ENCODE measurements at regions of chr2 and their contacts with region 1.

Region 1: DNA sequence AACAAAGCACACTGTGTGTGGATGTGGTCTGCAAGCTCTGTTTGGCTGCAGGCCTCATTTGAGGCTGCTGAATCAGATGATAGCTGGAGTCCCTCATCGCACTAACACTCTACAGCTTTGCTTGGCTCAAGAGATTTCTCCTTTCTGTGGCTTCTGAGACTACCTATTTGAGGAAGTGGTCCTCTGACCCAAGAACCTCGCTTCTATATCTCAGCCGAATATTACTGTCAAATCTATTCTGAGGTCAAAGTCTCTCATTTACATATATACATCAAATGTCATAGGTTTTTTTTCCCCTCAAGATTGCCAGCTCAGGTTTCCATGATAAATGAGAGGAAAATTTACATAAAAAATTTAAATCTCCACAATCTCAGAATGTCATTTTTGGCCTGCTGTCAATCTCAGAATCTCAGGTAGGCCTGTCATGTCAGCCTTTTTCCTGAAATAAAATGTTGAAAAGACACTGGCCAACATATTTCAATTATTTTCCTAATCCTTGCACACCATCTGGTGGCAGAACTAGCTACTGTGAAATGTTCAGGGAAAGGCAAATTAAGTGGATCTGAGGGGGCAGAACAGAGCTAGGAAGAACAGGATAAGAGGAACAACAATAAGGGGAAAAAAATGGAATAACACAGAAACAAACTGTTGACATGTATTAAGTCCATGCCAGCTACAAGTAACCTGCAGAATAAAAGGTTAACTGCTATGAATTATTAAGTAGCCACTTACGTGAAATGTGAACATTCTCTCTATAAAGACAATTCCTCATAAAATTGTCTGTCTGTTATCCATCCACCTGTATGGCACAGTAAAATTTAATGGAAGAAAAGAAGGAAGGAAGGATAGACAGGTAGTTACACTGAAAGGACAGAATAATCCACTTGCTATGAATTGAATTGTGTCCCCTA is 39.3 kb downstream of the AP1S3 start:
- DNase-seq: peak in 1 of 4 experiments; percentile 17
- ATAC-seq: peak; percentile 53; the same call in 1 of the 3 replicates
- H3K4me3 ChIP-seq: no peak overlapping the region
- H3K27ac ChIP-seq: no peak overlapping the region
- H3K4me1 ChIP-seq: no peaks in the 10 kb centered on the region
- H3K27me3 ChIP-seq: no peaks in the 10 kb centered on the region; a peak in 1 of 5 replicates
- CTCF ChIP-seq: peak; percentile 39 to 61 (median 41); a peak in 4 of 6 replicates
- EP300 ChIP-seq: no peak
- POLR2A ChIP-seq: no peak
- RAD21 ChIP-seq: peak; percentile 62 to 73

Region 2: GRCh38 chr2:223459328-223459939 is 338.6 kb before region 1 on chr2:
- CTCF ChIA-PET with region 1: no interaction called
- POLR2A ChIA-PET with region 1: no interaction called
- in situ Hi-C with region 1: no loop called
- intact Hi-C with region 1: loop called (anchors 1 kb)
- DNase-seq: peak in 3 of 4 experiments; percentile 6 to 7 (median 6)
- ATAC-seq: no peak
- H3K4me3 ChIP-seq: no peak overlapping the region
- H3K27ac ChIP-seq: no peak overlapping the region
- H3K4me1 ChIP-seq: no peaks in the 10 kb centered on the region
- H3K27me3 ChIP-seq: no peaks in the 10 kb centered on the region
- CTCF ChIP-seq: peak in 2 of 3 experiments; percentile 6 to 34; a peak in 2 of 6 replicates
- EP300 ChIP-seq: no peak
- POLR2A ChIP-seq: no peak
- RAD21 ChIP-seq: peak; percentile 35 to 42; a peak in 3 of 4 replicates

Region 3: DNA sequence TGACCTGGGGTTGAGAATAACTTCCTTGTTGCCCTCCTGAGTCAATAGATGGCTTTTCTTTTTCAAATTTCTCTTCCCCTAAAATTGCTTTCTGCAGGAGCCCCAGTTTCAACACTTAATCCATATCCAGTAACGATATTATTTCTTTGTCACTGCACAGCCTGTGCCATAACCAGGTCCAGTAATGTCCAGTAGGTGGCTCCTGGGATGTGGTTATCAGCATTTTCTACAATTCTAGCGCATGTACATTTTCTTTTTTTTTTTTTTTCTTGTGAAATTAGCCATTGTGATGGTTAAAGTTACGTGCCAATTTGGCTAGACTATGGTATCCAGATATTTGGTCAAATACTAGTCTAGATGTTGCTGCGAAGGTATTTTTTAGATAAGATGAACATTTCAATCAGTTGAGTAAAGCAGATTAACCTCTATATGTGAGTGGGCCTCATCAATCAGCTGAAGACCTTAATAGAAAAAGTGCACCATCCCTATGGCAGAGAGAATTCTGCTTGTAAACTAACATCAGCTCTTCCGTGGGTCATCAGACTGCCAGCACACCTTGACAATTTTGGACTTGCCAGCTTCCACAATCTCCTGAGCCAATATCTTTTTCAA is 123.0 kb before region 1 on chr2:
- CTCF ChIA-PET with region 1: no interaction called
- POLR2A ChIA-PET with region 1: no interaction called
- in situ Hi-C with region 1: no loop called
- intact Hi-C with region 1: loop called (anchors 10 kb)
- DNase-seq: peak; percentile 19 to 26 (median 22)
- ATAC-seq: peak; percentile 86
- H3K4me3 ChIP-seq: no peak overlapping the region
- H3K27ac ChIP-seq: no peak overlapping the region
- H3K4me1 ChIP-seq: no peaks in the 10 kb centered on the region
- H3K27me3 ChIP-seq: no peaks in the 10 kb centered on the region
- CTCF ChIP-seq: peak; percentile 34 to 58 (median 57); a peak in 5 of 6 replicates
- EP300 ChIP-seq: no peak
- POLR2A ChIP-seq: no peak
- RAD21 ChIP-seq: peak in 1 of 2 experiments; percentile 33; a peak in 2 of 4 replicates